ENCODE measurements at regions of chr14 and their contacts with region 1.

Region 1: GRCh38 chr14:68492381-68493151 is 300.3 kb downstream of the ZFP36L1 start:
- DNase-seq: no peak
- ATAC-seq: no peak
- H3K4me3 ChIP-seq: no peak overlapping the region
- H3K27ac ChIP-seq: no peak overlapping the region
- H3K4me1 ChIP-seq: no peaks in the 10 kb centered on the region
- H3K27me3 ChIP-seq: no peaks in the 10 kb centered on the region
- CTCF ChIP-seq: no peak
- POLR2A ChIP-seq: no peak
- RAD21 ChIP-seq: no peak

Region 2: DNA sequence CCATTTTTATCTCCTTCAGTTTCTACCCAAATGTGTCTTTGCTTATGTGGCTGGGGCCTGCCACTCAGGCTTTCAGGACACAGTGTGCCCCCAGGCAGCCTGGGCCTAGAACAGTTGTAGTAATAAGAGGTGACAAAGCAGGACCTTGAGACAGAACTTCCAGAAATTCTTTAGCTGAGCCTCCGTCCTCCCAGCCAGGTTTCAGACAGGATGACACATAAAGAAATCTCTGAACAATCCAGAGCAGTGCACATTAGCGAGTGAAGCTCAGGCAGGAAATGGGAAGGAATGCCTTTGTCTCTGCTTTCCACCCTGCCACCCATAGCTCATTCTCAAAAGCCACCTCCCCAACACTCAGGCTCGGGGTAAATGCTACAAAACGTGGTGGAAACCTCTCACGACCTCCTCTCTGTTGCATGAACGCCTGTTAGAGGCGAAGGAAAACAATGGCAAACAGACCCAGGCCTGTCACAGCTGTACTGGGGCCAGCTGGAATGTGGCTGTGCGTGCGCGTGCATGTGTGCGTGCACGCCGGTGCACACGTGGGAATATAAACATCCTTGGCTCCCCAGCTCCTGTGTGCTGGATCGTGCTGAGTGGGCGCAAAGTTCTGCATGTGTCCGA is 13.6 kb after region 1 on chr14:
- CTCF ChIA-PET with region 1: no interaction called
- POLR2A ChIA-PET with region 1: interaction called, 13 read pairs
- dilution Hi-C with region 1: no loop called
- in situ Hi-C with region 1: no loop called
- intact Hi-C with region 1: no loop called
- DNase-seq: peak; percentile 73
- ATAC-seq: peak; percentile 61
- H3K4me3 ChIP-seq: no peak overlapping the region
- H3K27ac ChIP-seq: peak overlapping the region; percentile 58
- H3K4me1 ChIP-seq: peaks cover 22% of the 10 kb centered on the region
- H3K27me3 ChIP-seq: no peaks in the 10 kb centered on the region
- CTCF ChIP-seq: no peak
- POLR2A ChIP-seq: no peak
- RAD21 ChIP-seq: no peak

Measured in IMR-90 (cell line).